Brain microvascular endothelial cell (primary cell): ENCODE measurements at regions of chr12 and their contacts with region 1.

Region 1: DNA sequence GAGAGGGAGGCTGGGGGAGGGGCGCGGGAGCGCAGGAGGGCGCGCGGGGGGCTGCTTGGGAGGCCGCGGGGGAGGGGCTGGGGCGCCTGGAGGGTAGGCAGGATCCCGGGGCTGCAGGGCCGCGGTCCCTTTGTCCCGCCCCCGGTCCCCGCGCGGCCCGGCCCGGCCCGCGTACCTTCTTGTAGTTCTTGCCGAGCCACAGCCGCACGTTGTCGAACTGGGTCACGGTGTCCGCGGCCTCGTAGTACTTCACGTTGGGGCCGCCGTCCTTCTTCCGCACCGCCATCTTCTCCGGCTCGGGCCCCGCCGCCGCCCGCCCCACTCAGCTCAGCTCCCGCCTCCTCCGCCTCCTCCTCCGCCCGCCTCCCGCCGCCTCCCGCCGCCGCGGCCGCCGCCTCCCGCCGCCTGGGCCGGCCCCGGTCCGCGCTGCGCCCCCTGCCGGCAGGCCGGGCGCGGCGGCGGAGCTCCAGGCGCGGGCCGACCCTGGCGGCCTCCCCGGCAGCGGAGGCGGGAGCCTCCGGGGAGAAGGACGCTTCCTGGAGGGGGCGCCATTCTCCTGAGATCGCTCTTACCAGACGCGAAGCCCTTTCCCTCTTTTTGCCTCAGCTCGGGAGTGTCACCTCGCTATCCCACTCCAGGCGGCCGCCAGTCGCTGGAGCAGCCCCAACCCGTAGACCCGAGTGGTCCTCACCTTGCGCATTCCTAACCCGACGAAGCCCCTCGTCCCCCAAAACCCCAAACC is at the start of gene SMARCC2:
- DNase-seq: peak; percentile 78
- H3K4me3 ChIP-seq: peak within 1 kb of the TSS; percentile 88
- H3K27ac ChIP-seq: no peak within 1 kb of the TSS
- H3K27me3 ChIP-seq: no peaks in the 10 kb centered on the region
- CTCF ChIP-seq: peak; percentile 74

Region 2: DNA sequence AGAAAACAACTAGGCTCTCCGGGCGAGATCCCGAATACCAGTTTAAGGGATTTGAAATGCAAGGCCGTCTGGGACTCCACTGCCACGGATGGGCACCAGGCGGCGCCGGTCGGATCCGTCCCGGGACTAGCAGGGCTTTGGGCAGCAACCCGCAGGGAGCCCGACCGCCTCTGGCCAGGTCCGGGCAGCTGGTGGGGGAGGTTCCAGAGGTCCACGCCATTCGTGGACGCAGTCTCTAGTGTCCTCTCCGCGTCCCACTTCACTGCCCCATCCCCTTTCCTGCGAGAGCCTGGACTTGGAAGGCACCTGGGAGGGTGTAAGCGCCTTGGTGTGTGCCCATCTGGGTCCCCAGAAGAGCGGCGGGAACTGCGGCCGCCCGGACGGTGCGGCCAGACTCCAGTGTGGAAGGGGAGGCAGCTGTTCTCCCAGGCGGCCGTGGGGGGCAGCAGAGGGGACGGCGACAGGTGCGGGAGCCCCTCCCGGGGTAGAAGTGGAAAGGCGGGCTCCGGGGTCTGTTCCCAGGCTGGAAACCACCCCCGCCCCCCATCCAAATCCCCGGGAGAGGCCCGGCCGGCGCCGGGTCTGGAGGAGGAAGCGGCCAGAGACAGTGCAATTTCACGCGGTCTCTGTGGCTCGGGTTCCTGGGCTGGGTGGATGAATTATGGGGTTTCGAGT is 110.2 kb before region 1 on chr12:
- in situ Hi-C with region 1: no loop called
- DNase-seq: peak; percentile 83
- H3K4me3 ChIP-seq: peak overlapping the region; percentile 61
- H3K27ac ChIP-seq: no peak overlapping the region
- H3K27me3 ChIP-seq: peaks cover 10% of the 10 kb centered on the region
- CTCF ChIP-seq: peak; percentile 84

Region 3: GRCh38 chr12:56117778-56118687 is 71.3 kb before region 1 on chr12 and contains the start of gene ZC3H10:
- in situ Hi-C with region 1: loop called (anchors 5 kb)
- DNase-seq: peak; percentile 99
- H3K4me3 ChIP-seq: peak within 1 kb of the TSS; percentile 98
- H3K27ac ChIP-seq: peak within 1 kb of the TSS; percentile 82
- H3K27me3 ChIP-seq: no peaks in the 10 kb centered on the region
- CTCF ChIP-seq: peak; percentile 61

Region 4: DNA sequence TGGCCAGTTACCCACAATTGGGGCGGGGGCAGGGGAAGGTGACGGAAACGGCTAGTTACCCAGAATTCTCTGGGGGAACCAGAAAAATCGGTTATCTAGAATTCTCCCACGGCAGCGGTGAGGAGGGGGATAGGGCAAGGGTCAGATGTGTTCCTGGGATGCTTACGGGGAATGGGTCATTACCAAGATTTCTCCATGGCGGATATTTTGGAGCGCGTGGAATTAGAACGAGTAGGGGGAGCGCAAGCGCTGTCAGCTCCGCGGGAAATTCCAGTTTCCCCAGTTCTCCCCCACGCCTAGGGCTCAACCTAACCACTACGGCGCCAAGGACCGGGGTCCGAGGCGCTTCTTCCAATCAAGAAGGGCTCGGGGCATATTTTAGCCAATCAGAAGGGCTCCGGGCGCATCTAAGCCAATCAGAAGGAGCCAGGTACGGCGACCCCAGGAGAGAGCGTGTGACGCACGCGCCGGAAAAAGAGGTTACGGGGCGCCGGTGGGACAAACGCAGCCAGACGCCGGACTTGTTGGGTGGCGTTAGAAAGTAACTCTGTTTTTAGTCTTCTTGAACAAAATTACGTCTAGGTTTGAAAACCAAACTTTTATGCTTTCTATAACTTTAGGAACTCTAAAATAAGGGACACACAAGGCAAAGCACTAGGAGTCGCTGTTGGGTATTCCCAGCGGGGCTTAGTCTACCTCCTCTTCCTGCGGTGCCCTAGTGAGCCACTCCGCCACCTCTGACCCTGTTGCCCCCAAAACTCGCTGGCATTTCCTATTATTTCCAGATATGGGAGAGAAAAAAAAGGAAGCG is 144.5 kb after region 1 on chr12 and contains the start of gene PAN2:
- in situ Hi-C with region 1: no loop called
- DNase-seq: peak; percentile 98
- H3K4me3 ChIP-seq: peak within 1 kb of the TSS; percentile 67
- H3K27ac ChIP-seq: peak within 1 kb of the TSS; percentile 98
- H3K27me3 ChIP-seq: no peaks in the 10 kb centered on the region
- CTCF ChIP-seq: peak; percentile 77